Dorsolateral prefrontal cortex (tissue), 120 donors: ENCODE measurements at regions of chr18 and their contacts with region 1.

Region 1: DNA sequence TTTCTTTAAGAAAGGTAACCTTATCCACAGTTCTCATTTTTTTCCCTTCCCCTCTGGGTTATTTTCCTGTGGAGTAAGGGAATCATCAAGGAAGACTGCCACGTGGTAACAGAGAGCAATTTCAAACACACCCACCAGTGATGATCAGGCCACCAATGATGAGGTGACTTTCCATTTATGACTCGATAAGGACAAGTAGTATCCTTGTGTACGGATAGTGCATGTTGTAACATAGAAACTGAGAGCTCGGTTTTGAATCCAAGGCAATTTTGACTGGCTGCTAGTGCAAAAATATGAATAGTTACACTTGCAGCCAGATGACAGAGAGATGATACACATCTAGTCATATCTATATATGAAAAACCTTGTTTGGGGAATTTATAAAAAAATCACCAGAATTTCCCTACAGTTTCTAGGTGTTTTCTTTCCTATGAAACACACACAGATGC is 143.6 kb upstream of the TCF4 start:
- DNase-seq: no peak
- H3K4me3 ChIP-seq: no peak overlapping the region
- H3K27ac ChIP-seq: no peak overlapping the region
- H3K27me3 ChIP-seq: peaks cover 0 to 3% (median 0%) of the 10 kb centered on the region in 45 donors
- CTCF ChIP-seq: no peak

Region 2: DNA sequence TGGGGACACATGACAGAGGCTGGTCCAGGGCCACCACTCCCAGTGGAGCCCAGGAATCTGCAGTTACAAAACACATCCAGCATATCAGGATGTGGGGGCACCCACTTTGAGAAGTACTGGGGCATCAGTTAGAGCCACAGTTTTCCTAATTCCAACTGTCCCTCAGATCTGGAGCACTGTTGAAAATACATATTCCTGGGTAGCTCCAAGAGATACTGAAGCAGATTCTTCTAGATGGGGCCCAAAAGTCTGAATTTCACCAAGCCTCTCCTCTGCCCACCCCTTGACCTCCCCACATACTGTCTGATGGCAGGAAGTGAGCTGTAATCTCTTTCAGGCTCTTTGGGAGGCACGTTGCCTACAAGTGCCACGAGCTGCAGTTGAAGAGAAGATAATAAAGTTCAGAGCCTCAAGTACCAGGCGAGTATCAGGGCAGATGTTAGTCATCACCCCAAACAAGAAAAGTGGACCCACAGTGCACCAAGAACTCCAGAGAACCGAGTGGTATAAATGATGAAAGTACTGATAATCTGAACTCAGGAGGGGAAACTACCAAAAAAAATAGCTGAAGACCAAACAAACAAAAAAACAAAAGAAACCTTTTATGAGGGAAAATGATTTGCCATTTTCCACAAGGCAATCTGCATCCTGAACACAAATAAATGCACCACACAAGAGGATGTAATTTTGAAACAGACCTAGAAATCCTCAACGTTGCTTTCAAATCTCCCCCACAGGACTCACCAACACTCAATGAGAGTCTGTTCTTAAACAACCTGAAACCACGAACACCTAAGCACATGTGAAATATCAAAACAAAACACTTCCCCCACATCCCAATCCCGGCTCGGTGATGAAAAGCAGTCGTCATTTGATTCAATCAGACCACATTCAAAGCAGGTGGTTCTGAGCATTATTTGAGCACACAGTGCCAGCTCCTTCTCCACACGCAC is 242.3 kb before region 1 on chr18:
- intact Hi-C with region 1: no loop called
- DNase-seq: peak in 1 of 10 donors; percentile 31
- H3K4me3 ChIP-seq: peak overlapping the region in 21 of 59 donors; percentile 2 to 37 (median 16)
- H3K27ac ChIP-seq: peak overlapping the region in 28 of 59 donors; percentile 4 to 61 (median 26)
- H3K27me3 ChIP-seq: no peaks in the 10 kb centered on the region
- CTCF ChIP-seq: no peak

Region 3: GRCh38 chr18:55856229-55856628 is 124.6 kb after region 1 on chr18:
- intact Hi-C with region 1: loop called in 1 of 2 experiments (anchors 5 kb)
- DNase-seq: no peak
- H3K4me3 ChIP-seq: no peak overlapping the region
- H3K27ac ChIP-seq: no peak overlapping the region
- H3K27me3 ChIP-seq: no peaks in the 10 kb centered on the region
- CTCF ChIP-seq: no peak